Activated CD8-positive, alpha-beta T cell treated with anti-CD3 and anti-CD28 coated beads, Interleukin-2, amount 10 ng/mL, durations not matched to agents 7 days and 5 days (primary cell): ENCODE measurements at regions of chr11 and their contacts with region 1.

Region 1: GRCh38 chr11:44775366-44775984 is 48.7 kb downstream of the TSPAN18 start:
- DNase-seq: peak; percentile 73
- ATAC-seq: peak; percentile 75
- H3K4me3 Mint-ChIP-seq: no peak overlapping the region
- H3K27ac Mint-ChIP-seq: no peak overlapping the region
- H3K4me1 Mint-ChIP-seq: no peaks in the 10 kb centered on the region
- H3K27me3 Mint-ChIP-seq: peaks cover 5% of the 10 kb centered on the region

Region 2: GRCh38 chr11:44548032-44548695 is 227.3 kb before region 1 on chr11:
- CTCF ChIA-PET with region 1: no interaction called
- POLR2A ChIA-PET with region 1: no interaction called
- DNase-seq: no peak
- ATAC-seq: no peak
- H3K4me3 Mint-ChIP-seq: no peak overlapping the region
- H3K27ac Mint-ChIP-seq: no peak overlapping the region
- H3K4me1 Mint-ChIP-seq: no peaks in the 10 kb centered on the region
- H3K27me3 Mint-ChIP-seq: peaks cover 5% of the 10 kb centered on the region

Region 3: GRCh38 chr11:44621140-44621681 is 154.3 kb before region 1 on chr11:
- CTCF ChIA-PET with region 1: interaction called, 16 read pairs
- POLR2A ChIA-PET with region 1: no interaction called
- DNase-seq: peak; percentile 65
- ATAC-seq: peak; percentile 65
- H3K4me3 Mint-ChIP-seq: no peak overlapping the region
- H3K27ac Mint-ChIP-seq: no peak overlapping the region
- H3K4me1 Mint-ChIP-seq: peaks cover 13% of the 10 kb centered on the region
- H3K27me3 Mint-ChIP-seq: no peaks in the 10 kb centered on the region

Region 4: DNA sequence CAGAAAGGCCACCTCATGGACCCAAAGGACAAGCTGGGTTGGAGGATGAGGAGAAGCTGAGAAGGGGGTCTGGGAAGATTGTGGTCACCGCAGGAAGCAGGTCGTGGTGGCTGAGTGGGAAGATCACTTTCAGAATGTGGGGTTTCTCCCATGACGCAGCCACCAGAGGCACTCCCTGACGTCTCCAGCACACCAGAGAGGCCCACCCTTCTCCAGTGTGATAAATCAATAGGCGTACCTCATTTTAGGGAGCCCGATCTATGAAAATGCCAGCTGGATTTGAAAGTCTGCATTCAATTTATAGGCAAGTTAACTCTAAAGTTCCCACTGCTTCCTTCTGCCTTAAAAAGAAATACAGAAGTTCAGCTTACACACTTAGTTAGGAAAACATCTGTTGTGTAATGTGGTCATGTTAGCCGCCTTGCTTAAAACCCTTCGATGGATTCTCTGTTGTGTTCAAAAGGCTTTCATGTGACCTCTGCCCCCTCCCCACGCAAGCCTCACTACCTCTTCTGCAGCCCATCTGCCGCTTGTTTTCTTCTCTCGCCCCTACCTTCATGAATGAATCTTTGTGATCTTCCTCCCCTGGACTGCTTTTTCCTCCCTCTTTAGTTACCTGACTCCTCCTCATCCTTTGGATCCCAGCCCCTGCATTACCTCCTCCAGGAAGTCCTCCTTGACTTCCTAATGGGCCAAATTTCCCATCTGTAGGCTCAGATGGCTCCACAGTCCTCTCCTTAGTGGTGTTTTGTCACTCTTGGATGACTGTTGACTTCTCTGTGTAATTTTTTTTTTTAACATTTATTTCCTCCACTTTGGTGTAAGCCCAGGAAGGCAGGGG is 38.0 kb before region 1 on chr11:
- CTCF ChIA-PET with region 1: interaction called, 10 read pairs
- POLR2A ChIA-PET with region 1: no interaction called
- DNase-seq: no peak
- ATAC-seq: no peak
- H3K4me3 Mint-ChIP-seq: no peak overlapping the region
- H3K27ac Mint-ChIP-seq: no peak overlapping the region
- H3K4me1 Mint-ChIP-seq: peaks cover 13% of the 10 kb centered on the region
- H3K27me3 Mint-ChIP-seq: peaks cover 4% of the 10 kb centered on the region

Region 5: DNA sequence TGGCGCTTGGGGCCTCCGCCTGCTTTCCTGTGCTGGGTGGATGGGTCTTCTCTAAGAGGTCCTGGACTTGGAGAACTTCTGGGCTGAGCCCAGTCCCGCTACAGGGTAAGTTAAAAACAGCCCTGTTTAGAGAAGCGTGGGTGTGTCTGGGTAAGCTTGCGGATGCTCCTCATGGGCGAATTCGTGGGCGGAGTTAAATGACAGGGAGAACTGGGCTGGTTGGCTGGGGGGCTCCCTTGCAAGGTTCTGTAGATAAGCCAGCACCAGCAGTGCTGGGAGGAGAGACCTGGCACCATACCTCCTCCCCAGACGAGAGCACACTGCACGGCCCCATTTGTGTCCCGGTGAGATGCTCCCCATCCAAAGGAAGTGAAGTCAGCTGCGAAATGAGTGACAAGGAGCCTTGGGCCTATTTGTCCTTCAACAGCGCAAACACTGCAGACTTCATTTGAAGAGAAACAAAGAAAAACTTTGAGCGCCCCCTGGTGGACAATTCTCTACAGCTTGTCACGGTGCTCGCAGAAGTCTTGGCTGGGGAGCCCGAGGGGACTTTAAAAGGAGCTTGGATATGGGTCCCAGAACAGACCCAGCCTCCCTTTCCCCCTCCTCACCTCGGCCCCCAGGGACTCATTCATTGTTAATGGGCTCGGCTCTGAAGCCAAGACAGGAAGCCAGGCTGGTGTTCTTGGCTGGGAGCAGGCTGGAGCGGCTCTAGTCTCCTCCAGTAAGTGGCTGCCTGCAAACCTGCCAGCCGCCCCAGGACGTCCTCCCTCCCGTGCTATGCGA is 135.7 kb after region 1 on chr11:
- CTCF ChIA-PET with region 1: interaction called, 13 read pairs
- POLR2A ChIA-PET with region 1: no interaction called
- DNase-seq: peak; percentile 91
- ATAC-seq: peak; percentile 82
- H3K4me3 Mint-ChIP-seq: no peak overlapping the region
- H3K27ac Mint-ChIP-seq: no peak overlapping the region
- H3K4me1 Mint-ChIP-seq: no peaks in the 10 kb centered on the region
- H3K27me3 Mint-ChIP-seq: peaks cover 3% of the 10 kb centered on the region